ENCODE measurements at regions of chr3 and their contacts with region 1.

Region 1: DNA sequence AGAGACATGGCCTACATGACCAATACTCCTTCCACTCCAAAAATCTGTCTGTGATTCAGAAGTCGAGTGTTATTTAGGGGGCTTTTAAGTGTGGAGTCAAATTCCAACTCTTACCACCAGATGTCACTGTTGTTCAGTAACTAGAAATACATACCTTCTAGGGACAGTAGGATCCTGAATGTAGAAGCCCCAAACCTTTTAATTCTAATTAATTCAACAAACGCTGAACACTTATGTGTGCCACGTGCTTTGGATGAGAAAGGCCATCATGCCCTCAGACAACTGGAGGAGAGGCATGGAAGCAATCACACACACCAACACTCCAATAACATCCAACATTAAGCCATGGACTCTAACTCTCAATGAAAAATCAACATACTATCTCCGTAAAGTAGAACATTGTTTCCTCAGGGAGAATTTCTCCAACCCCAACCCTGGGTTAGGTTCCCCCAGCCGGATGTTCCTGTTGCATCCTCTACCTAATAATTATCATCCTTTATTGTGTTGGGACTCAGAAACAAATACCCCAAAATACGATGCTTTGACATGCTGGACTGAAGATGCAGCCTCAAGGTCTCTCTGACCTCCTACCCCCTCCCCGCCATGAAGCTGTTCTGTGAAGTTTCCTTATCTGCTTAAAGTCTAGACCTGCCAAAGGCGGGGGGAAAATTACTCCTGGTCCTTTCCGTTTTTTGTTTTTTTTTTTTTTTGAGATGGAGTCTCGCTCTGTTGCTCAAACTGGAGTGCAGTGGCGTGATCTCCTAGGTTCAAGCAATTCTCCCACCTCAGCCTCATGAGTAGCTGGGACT is 8.0 kb upstream of the CCDC13 start:
- H3K4me3 ChIP-seq: no peak overlapping the region
- H3K27ac ChIP-seq: no peak overlapping the region
- H3K4me1 ChIP-seq: no peaks in the 10 kb centered on the region
- CTCF ChIP-seq: peak; percentile 44; the same call in 1 of the 2 replicates

Region 2: GRCh38 chr3:42518800-42519567 is 262.1 kb before region 1 on chr3:
- CTCF ChIA-PET with region 1: no interaction called
- POLR2A ChIA-PET with region 1: no interaction called
- H3K4me3 ChIP-seq: no peak overlapping the region
- H3K27ac ChIP-seq: no peak overlapping the region
- H3K4me1 ChIP-seq: no peaks in the 10 kb centered on the region
- CTCF ChIP-seq: no peak

Region 3: DNA sequence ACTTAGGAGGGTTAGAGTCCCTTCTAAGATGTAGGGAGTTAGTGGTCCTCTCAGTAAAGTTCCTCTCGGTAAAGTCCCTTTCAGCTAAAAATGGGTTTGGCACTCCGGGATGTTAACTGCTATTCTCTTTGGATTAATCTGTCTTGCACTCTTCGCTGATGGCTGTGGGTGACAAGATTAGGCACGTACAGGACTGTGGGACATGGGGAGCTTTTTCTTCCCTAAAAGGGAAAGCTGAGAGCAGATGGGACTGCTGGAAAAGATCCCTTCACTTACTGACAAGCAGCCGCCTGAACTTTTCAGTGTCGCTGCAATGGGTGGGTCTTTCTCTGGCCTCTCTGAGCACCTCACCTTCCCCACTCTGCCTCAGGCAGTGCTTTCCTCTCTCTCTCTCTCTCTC is 62.1 kb before region 1 on chr3:
- CTCF ChIA-PET with region 1: no interaction called
- POLR2A ChIA-PET with region 1: no interaction called
- H3K4me3 ChIP-seq: no peak overlapping the region
- H3K27ac ChIP-seq: no peak overlapping the region
- H3K4me1 ChIP-seq: no peaks in the 10 kb centered on the region
- CTCF ChIP-seq: no peak

Region 4: GRCh38 chr3:42745776-42746454 is 35.2 kb before region 1 on chr3:
- CTCF ChIA-PET with region 1: interaction called, 13 read pairs
- POLR2A ChIA-PET with region 1: no interaction called
- H3K4me3 ChIP-seq: no peak overlapping the region
- H3K27ac ChIP-seq: no peak overlapping the region
- H3K4me1 ChIP-seq: no peaks in the 10 kb centered on the region
- CTCF ChIP-seq: no peak

Region 5: GRCh38 chr3:42831321-42831713 is 50.2 kb after region 1 on chr3:
- CTCF ChIA-PET with region 1: interaction called, 27 read pairs
- POLR2A ChIA-PET with region 1: interaction called, 4 read pairs
- H3K4me3 ChIP-seq: no peak overlapping the region
- H3K27ac ChIP-seq: no peak overlapping the region
- H3K4me1 ChIP-seq: no peaks in the 10 kb centered on the region
- CTCF ChIP-seq: 0 out of 2 replicates have a peak, but pooled peaks have one; percentile 21

Region 6: DNA sequence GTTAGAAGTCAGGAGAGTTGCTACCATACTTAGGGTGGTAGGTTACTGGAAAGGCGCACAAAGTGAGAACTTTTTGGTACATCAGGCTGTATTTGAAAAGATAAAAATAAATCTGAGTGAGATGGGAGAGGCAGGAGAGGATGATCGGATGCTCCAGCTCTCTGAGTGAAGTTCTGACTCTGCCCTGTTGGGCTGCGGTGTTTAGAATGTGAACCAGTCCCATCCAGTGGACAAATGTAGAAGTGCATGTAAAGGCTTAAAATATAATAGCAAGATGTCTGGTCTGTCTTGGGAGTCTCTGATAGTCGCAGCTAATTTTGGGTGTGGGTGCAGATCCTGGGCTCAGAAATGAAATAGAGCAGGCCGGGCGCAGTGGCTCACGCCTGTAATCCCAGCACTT is 58.5 kb after region 1 on chr3:
- CTCF ChIA-PET with region 1: interaction called, 48 read pairs
- POLR2A ChIA-PET with region 1: interaction called, 5 read pairs
- H3K4me3 ChIP-seq: no peak overlapping the region
- H3K27ac ChIP-seq: no peak overlapping the region
- H3K4me1 ChIP-seq: no peaks in the 10 kb centered on the region
- CTCF ChIP-seq: 0 out of 2 replicates have a peak, but pooled peaks have one; percentile 34

Region 7: DNA sequence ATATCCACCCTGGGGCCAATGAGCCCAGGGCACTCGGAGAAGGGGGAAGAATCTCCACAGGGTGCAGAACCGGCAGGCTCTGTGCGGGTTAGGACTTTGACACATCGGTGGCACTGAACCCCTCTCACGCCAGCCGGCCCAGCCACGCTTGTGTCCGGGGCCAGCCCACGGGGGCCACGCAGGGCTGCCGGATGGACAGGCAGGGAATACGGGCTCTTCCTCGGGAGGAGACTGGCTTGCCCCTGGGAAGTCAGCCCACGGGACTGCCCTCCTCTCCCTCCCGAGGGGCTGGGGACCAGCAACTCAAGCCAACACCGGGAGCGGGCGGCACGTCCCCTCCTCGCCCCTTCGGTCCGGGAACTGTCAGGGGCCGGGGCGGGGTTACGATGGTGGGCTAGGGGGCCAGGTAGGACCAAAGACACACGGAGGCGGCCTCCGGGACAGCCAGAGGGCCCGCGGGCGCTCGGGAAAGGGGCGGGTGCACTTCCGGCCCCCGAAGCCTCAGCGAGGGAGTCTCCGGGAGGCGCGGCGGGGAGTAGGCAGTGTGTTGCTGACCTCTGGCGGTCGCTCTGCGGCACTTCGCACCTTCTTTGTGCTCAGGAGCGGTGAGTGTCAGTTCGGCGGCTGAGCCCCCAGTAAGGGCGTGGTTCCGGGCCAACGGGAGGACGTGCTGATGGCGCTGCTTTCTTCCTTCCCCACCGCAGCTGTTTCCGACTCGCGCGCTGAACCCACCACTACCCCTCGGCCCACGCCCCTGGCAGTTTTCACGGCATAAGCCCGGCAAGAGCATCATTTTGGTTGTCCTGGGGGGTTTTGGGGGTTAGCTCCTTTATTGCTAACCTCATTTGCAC is 99.7 kb after region 1 on chr3:
- CTCF ChIA-PET with region 1: interaction called, 19 read pairs
- POLR2A ChIA-PET with region 1: no interaction called
- H3K4me3 ChIP-seq: peak overlapping the region; percentile 31
- H3K27ac ChIP-seq: no peak overlapping the region
- H3K4me1 ChIP-seq: no peaks in the 10 kb centered on the region
- CTCF ChIP-seq: peak; percentile 96

Region 8: DNA sequence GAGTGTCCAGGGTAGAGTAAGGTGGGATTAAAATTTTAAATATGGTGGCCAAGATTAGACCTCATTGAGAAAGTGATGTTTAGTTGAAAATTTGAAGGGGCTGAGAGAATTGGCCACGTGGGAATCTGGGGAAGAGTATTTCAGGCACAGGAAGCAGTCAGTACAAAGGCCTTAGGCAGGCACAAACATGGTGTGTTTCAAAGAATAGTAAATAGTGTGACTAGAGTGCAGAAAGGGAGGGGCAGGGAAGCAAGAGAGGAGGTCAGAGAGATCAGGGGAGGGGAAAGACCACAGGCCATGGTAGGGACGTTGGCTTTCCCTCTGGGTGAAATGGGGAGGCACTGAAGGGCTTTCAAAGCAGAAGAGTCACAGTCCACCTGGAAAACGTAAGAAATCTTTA is 361.4 kb after region 1 on chr3:
- CTCF ChIA-PET with region 1: no interaction called
- POLR2A ChIA-PET with region 1: no interaction called
- H3K4me3 ChIP-seq: no peak overlapping the region
- H3K27ac ChIP-seq: no peak overlapping the region
- H3K4me1 ChIP-seq: no peaks in the 10 kb centered on the region
- CTCF ChIP-seq: no peak

Measured in HEK293 (cell line).